A673 (cell line): ENCODE measurements at regions of chr4 and their contacts with region 1.

Region 1: DNA sequence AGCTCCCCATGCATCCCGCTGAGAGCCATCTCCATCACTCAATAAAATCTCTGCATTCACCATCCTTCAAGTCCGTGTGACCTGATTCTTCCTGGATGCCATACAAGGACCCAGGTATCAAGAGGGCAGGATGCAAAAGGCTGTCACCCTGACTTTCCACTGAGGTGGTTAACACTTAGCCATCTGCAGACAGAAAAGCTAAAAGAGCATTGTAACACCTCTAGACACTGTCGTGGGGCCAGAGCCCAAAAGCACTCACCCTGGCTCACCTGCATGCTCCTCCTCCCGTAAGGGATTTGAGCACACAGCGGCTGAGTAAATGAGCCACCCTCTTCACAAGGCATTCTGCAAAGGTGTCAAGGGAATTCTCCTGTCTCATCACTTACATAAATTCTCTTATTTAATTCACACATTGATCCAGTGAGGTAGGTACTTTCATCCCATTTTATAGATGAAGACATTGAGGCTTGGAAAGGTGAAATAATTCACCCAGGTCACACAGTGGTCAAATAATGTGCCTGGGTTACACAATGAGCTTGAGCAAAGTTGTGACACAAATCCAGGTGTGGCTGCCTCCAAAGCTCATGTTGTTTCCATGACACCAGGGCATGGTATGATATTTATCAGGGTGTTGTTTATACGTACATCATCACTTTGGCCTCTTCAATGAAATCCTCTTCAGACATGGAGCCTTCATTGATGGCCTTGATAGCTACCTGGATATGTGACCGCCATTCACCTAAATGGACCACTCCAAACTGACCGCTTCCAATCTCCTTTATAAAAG is 48.0 kb downstream of the TXK start:
- DNase-seq: no peak
- H3K4me3 ChIP-seq: no peak overlapping the region
- H3K27ac ChIP-seq: no peak overlapping the region
- H3K4me1 ChIP-seq: peaks cover 7% of the 10 kb centered on the region
- H3K27me3 ChIP-seq: no peaks in the 10 kb centered on the region
- CTCF ChIP-seq: no peak

Region 2: DNA sequence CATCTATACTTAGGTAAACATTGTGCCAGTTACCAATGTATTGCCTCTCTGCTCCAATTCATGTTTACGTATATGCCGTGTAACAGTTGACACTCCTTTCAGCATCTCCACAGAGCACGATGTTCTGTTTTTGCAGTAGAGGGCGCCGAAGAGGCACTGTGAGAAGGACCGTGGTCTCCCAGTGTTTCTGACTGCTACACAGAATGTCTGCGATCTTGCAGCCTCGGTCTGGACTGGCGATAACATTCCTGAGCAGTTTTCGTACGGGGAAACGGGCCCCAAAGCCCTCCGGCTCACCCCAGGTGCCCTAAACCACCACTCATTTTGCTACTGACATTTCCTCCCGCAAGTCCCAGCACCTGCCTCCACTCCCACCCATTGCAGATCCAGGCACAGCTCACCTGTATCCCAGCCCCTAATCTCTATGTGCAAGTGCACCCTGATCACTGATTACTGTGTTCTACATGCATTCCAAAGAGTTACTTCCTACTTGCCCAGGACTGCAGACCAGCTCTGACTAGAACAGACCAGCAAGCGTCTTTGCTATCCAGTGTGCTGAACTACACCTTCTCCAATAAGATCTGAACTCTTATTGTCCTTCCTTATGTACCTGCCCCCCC is 159.3 kb before region 1 on chr4:
- CTCF ChIA-PET with region 1: no interaction called
- POLR2A ChIA-PET with region 1: no interaction called
- intact Hi-C with region 1: loop called (anchors 2 kb)
- DNase-seq: peak; percentile 82
- H3K4me3 ChIP-seq: peak overlapping the region; percentile 21
- H3K27ac ChIP-seq: no peak overlapping the region
- H3K4me1 ChIP-seq: peaks cover 6% of the 10 kb centered on the region
- H3K27me3 ChIP-seq: peaks cover 17% of the 10 kb centered on the region
- CTCF ChIP-seq: peak; percentile 88

Region 3: DNA sequence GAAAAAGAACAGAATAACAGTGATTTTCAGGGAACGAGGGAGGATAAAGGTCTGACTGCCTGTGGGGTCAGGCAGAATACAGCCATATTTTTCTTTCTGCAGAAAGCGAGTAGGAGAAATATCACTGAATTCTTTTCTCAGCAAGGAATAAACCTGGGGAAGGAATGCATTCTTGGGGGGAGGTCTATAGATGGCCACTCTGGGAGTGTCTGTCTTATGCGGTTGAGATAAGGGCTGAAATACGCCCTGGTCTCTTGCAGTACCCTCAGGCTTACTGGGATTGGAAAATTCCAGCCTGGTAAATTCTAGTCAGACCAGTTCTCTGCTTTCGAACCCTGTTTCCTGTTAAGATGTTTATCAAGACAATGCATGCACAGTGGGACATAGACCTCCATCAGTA is 95.9 kb before region 1 on chr4:
- CTCF ChIA-PET with region 1: no interaction called
- POLR2A ChIA-PET with region 1: no interaction called
- intact Hi-C with region 1: no loop called
- DNase-seq: no peak
- H3K4me3 ChIP-seq: no peak overlapping the region
- H3K27ac ChIP-seq: no peak overlapping the region
- H3K4me1 ChIP-seq: no peaks in the 10 kb centered on the region
- H3K27me3 ChIP-seq: no peaks in the 10 kb centered on the region
- CTCF ChIP-seq: no peak

Region 4: DNA sequence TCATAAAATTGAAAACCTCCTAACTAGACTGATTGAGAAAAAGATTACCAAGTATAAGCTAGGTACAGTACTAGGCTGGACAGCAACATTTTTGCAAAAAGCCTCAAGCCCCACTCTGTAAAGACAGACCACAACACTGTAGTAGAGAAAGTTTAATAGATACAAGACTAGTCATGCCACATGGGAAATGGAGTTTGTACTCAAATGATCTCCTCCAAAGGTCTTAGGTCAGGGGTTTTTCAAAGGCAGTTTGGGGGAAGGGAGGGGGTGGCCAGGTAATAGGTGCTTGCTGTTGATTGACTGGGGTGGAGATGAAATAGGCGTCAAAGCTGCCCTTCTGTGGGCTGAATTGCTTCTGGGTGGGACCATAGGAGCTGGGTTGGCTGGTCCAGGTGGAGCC is 83.7 kb before region 1 on chr4:
- CTCF ChIA-PET with region 1: no interaction called
- POLR2A ChIA-PET with region 1: no interaction called
- intact Hi-C with region 1: loop called (anchors 2 kb)
- DNase-seq: no peak
- H3K4me3 ChIP-seq: no peak overlapping the region
- H3K27ac ChIP-seq: no peak overlapping the region
- H3K4me1 ChIP-seq: no peaks in the 10 kb centered on the region
- H3K27me3 ChIP-seq: no peaks in the 10 kb centered on the region
- CTCF ChIP-seq: no peak

Region 5: GRCh38 chr4:48033825-48034413 is 52.1 kb before region 1 on chr4:
- CTCF ChIA-PET with region 1: no interaction called
- POLR2A ChIA-PET with region 1: no interaction called
- intact Hi-C with region 1: loop called (anchors 5 kb)
- DNase-seq: peak; percentile 64
- H3K4me3 ChIP-seq: no peak overlapping the region
- H3K27ac ChIP-seq: no peak overlapping the region
- H3K4me1 ChIP-seq: no peaks in the 10 kb centered on the region
- H3K27me3 ChIP-seq: no peaks in the 10 kb centered on the region
- CTCF ChIP-seq: peak; percentile 69

Region 6: GRCh38 chr4:48141048-48141447 is 55.0 kb after region 1 on chr4:
- CTCF ChIA-PET with region 1: interaction called, 3 read pairs
- POLR2A ChIA-PET with region 1: no interaction called
- intact Hi-C with region 1: loop called (anchors 5 kb)
- DNase-seq: peak; percentile 71
- H3K4me3 ChIP-seq: no peak overlapping the region
- H3K27ac ChIP-seq: no peak overlapping the region
- H3K4me1 ChIP-seq: peaks cover 17% of the 10 kb centered on the region
- H3K27me3 ChIP-seq: no peaks in the 10 kb centered on the region
- CTCF ChIP-seq: peak; percentile 68